ENCODE measurements at regions of chr3 and their contacts with region 1.

Region 1: GRCh38 chr3:149086232-149086988 is at the start of gene HLTF:
- DNase-seq: peak; percentile 77 to 95 (median 88)
- ATAC-seq: peak; percentile 97
- H3K4me3 ChIP-seq: peak within 1 kb of the TSS; percentile 82
- H3K4me3 Mint-ChIP-seq: peak within 1 kb of the TSS; percentile 97
- H3K27ac ChIP-seq: peak within 1 kb of the TSS in 1 of 2 donors; percentile 46
- H3K27ac Mint-ChIP-seq: peak within 1 kb of the TSS; percentile 84
- H3K4me1 ChIP-seq: peaks cover 15% of the 10 kb centered on the region
- H3K4me1 Mint-ChIP-seq: peaks cover 30% of the 10 kb centered on the region
- H3K27me3 ChIP-seq: no peaks in the 10 kb centered on the region
- H3K27me3 Mint-ChIP-seq: no peaks in the 10 kb centered on the region
- CTCF ChIP-seq: no peak
- total RNA-seq, gene HLTF: 3.3 to 3.6 TPM

Region 2: DNA sequence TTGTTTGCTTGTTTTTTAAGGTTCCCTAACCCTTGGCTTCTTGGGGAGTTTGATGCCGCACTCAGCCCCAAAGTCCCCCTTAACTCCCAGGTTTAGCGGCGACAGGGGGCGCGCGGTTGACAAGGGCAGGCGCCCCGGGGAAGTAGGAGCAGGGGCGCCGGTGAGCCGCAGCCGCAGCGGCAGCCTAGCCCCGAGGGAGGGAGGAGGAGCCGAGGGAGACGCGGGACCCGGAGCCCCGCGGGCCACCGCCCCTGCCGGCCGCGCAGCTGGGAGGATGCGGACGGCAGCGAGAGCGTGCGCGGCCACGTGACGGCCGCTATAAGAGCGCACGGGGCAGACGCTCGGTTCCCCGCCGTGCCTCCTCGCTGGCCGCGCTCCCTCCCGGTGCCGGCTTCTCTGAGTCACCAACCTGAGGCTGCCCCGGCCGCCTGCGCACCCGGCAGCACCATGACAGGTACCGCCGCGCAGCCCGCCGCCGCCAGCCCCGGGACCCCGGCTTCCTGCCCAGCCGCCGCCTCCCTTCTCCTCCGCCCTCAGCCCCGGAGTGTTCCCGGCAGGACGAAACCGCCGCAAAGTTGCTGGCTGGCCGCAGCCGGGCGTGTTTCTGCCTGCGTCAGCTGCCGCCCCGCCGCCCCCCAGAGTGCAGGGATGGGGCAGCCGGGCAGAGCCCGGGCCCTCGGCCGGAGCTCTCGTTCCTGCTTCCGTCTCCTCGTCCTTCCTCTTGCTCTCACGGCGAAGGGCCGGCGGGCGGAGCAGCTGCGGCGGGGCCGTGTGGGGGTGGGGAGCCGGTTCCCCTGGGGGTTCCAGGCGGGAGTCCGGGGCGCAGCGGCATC is 95.0 kb before region 1 on chr3 and contains the start of gene GYG1:
- CTCF ChIA-PET with region 1: no interaction called
- POLR2A ChIA-PET with region 1: interaction called, 6 read pairs
- intact Hi-C with region 1: loop called in 1 of 2 experiments (anchors 5 kb)
- DNase-seq: peak; percentile 61 to 95 (median 76)
- ATAC-seq: peak; percentile 88
- H3K4me3 ChIP-seq: peak within 1 kb of the TSS; percentile 60
- H3K4me3 Mint-ChIP-seq: peak within 1 kb of the TSS; percentile 87
- H3K27ac ChIP-seq: peak within 1 kb of the TSS; percentile 55 to 56
- H3K27ac Mint-ChIP-seq: peak within 1 kb of the TSS; percentile 76
- H3K4me1 ChIP-seq: peaks cover 22% of the 10 kb centered on the region
- H3K4me1 Mint-ChIP-seq: peaks cover 27% of the 10 kb centered on the region
- H3K27me3 ChIP-seq: no peaks in the 10 kb centered on the region
- H3K27me3 Mint-ChIP-seq: no peaks in the 10 kb centered on the region
- CTCF ChIP-seq: peak; percentile 40
- total RNA-seq, gene GYG1: 21.0 to 22.3 TPM

Region 3: GRCh38 chr3:149058602-149059001 is 27.8 kb before region 1 on chr3:
- CTCF ChIA-PET with region 1: no interaction called
- POLR2A ChIA-PET with region 1: no interaction called
- intact Hi-C with region 1: no loop called
- DNase-seq: no peak
- ATAC-seq: no peak
- H3K4me3 ChIP-seq: no peak overlapping the region
- H3K4me3 Mint-ChIP-seq: no peak overlapping the region
- H3K27ac ChIP-seq: no peak overlapping the region
- H3K27ac Mint-ChIP-seq: no peak overlapping the region
- H3K4me1 ChIP-seq: no peaks in the 10 kb centered on the region
- H3K4me1 Mint-ChIP-seq: no peaks in the 10 kb centered on the region
- H3K27me3 ChIP-seq: no peaks in the 10 kb centered on the region
- H3K27me3 Mint-ChIP-seq: no peaks in the 10 kb centered on the region
- CTCF ChIP-seq: no peak

Measured in CD4-positive, alpha-beta T cell (primary cell).